BJ (cell line): ENCODE measurements at regions of chr20 and their contacts with region 1.

Region 1: GRCh38 chr20:47725248-47725973 is 59.9 kb downstream of the SULF2 start:
- DNase-seq: peak; percentile 41
- H3K4me3 ChIP-seq: no peak overlapping the region
- H3K27me3 ChIP-seq: no peaks in the 10 kb centered on the region
- CTCF ChIP-seq: peak; percentile 91

Region 2: GRCh38 chr20:47778398-47779338 is 53.3 kb after region 1 on chr20:
- CTCF ChIA-PET with region 1: interaction called, 16 read pairs
- POLR2A ChIA-PET with region 1: no interaction called
- DNase-seq: no peak
- H3K4me3 ChIP-seq: no peak overlapping the region
- H3K27me3 ChIP-seq: peaks cover 10% of the 10 kb centered on the region
- CTCF ChIP-seq: no peak